Activated CD8-positive, alpha-beta T cell treated with anti-CD3 and anti-CD28 coated beads, Interleukin-2, amount 10 ng/mL, durations not matched to agents 7 days and 5 days (primary cell): ENCODE measurements at regions of chr7 and their contacts with region 1.

Region 1: GRCh38 chr7:142301923-142302550 is 44.2 kb upstream of the PRSS58 start:
- DNase-seq: no peak
- ATAC-seq: peak; percentile 47
- H3K4me3 Mint-ChIP-seq: no peak overlapping the region
- H3K27ac Mint-ChIP-seq: no peak overlapping the region
- H3K4me1 Mint-ChIP-seq: peaks cover 14% of the 10 kb centered on the region
- H3K27me3 Mint-ChIP-seq: peaks cover 19% of the 10 kb centered on the region

Region 2: DNA sequence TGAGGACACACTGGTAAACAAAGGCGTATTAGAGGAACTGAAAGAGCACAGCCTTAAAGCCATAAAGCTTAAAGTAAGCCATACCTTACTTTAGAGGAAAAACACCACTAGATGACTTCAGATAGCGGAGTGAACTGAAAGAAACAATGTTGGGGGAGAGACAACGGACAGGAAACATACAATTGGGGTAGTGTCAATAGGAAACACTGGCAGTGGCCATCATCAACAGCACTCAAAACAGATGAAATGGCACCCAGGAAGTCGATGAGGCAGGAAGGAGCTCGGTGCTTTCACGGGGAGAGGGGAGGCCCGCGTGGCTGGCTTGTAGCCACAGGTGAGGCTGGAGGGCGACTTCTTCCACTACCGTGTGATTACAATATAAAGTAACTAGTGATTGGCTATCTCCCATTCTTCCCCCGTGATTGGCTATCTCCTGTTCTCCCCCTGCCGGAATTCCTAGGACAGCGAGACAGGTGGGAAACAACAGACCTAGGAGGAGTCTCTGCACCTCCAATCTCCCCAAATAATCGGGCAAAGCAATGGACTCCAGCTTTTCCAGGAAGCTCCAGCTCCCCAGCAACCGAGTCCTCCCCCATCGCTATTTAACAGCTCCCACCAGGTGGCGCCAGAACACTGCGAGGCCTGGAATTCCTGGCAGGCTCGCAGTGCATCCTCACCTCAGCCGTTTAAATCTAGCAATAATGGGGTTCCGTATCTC is 326.1 kb before region 1 on chr7:
- CTCF ChIA-PET with region 1: interaction called, 88 read pairs
- POLR2A ChIA-PET with region 1: no interaction called
- DNase-seq: peak; percentile 77
- ATAC-seq: peak; percentile 91
- H3K4me3 Mint-ChIP-seq: peak overlapping the region; percentile 63
- H3K27ac Mint-ChIP-seq: peak overlapping the region; percentile 1
- H3K4me1 Mint-ChIP-seq: peaks cover 22% of the 10 kb centered on the region
- H3K27me3 Mint-ChIP-seq: no peaks in the 10 kb centered on the region

Region 3: DNA sequence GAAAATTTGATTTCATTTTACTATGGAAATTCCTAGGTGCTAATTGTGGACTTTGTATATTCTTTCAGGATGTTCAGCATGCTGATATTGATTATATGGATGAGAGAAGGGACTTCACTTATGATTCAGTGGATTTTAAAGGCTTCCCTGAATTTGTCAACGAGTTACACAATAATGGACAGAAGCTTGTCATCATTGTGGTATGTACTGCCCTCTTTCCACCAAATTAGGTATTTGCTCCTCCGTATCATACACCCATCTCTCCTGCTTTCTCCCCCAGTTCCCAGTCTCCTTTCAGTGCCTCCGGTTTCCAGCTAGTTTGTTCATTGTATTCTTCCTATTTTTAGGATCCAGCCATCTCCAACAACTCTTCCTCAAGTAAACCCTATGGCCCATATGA is 271.7 kb before region 1 on chr7:
- CTCF ChIA-PET with region 1: no interaction called
- POLR2A ChIA-PET with region 1: no interaction called
- DNase-seq: no peak
- ATAC-seq: no peak
- H3K4me3 Mint-ChIP-seq: no peak overlapping the region
- H3K27ac Mint-ChIP-seq: no peak overlapping the region
- H3K4me1 Mint-ChIP-seq: no peaks in the 10 kb centered on the region
- H3K27me3 Mint-ChIP-seq: peaks cover 7% of the 10 kb centered on the region

Region 4: DNA sequence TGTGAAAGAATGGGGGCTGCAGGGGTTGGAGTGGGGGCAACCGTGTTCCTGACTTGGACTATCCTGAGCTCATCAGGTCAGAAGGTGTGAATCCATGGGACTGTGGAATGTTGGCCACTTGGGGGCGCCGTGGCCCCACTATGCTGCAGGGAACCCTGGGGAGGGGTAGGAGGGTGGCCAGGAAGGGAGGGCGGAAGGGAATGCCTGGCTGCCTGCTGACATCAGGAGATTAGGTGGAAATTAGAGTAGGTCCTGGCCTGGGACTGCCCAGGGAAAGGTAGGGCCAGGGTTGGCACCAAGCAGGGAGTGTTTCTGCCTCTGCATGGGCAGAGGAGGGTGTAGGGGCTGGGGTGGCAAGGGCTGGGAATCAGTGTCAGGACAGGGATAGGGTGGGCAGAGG is 21.7 kb after region 1 on chr7:
- CTCF ChIA-PET with region 1: interaction called, 53 read pairs
- POLR2A ChIA-PET with region 1: interaction called, 4 read pairs
- DNase-seq: peak; percentile 53
- ATAC-seq: peak; percentile 72
- H3K4me3 Mint-ChIP-seq: no peak overlapping the region
- H3K27ac Mint-ChIP-seq: peak overlapping the region; percentile 31
- H3K4me1 Mint-ChIP-seq: peaks cover 20% of the 10 kb centered on the region
- H3K27me3 Mint-ChIP-seq: peaks cover 22% of the 10 kb centered on the region

Region 5: DNA sequence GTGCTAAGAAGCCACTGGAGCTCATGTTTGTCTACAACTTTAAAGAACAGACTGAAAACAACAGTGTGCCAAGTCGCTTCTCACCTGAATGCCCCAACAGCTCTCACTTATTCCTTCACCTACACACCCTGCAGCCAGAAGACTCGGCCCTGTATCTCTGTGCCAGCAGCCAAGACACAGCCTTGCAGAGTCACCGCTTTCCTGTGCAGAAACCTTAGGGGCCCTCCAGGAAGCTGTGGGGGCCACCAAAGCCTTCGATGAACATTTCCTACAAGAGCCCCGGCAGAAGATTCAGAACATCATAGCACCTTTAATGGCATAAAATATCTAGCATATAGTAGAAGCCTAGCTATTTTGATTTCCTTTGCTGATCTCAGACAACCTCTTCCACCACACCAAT is 43.8 kb after region 1 on chr7:
- CTCF ChIA-PET with region 1: interaction called, 15 read pairs
- POLR2A ChIA-PET with region 1: interaction called, 3 read pairs
- DNase-seq: peak; percentile 73
- ATAC-seq: peak; percentile 93
- H3K4me3 Mint-ChIP-seq: peak overlapping the region; percentile 47
- H3K27ac Mint-ChIP-seq: peak overlapping the region; percentile 79
- H3K4me1 Mint-ChIP-seq: peaks cover 27% of the 10 kb centered on the region
- H3K27me3 Mint-ChIP-seq: peaks cover 5% of the 10 kb centered on the region

Region 6: DNA sequence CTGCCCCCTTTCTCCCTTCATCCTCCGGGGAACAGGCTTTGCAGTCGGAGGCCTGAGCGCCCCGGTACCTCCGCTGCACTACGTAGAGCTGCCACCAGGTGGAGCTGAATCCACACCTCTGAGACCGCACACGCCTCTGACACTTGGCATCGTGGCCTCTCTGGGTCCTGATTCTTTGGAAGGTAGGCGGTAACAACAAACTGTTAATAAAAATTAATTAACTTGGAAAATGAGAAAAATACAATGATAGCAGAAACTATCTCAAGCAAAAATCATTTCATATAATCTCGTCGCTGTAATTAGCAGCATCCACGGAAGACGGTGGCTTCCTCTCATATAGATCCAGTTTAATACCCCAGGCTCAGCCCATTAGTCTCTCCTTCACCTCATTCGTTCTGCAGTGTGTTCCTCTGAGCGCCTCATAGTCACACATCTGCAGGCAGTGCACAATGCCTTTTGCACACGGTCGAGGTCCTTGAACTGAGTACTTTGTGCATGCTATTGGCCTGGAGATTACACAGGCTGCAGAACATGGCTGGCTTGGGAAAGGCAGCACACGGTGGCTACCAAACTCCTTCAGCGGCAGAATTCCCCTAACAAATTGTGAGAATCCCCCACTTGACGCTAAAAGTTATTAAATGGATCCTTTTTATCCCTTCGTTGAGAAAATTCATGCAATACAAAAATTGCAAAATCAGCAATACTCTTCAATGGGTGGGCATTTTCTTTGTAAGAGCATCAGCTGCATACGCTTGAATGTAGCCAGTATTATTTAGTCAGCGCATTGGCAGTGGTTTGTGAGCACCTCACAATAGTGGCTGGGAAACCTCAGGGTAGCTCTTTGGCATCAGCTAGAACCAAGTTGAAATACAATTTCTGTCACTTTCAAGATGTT is 706.2 kb after region 1 on chr7:
- CTCF ChIA-PET with region 1: interaction called, 22 read pairs
- POLR2A ChIA-PET with region 1: no interaction called
- DNase-seq: peak; percentile 86
- ATAC-seq: peak; percentile 93
- H3K4me3 Mint-ChIP-seq: no peak overlapping the region
- H3K27ac Mint-ChIP-seq: no peak overlapping the region
- H3K4me1 Mint-ChIP-seq: peaks cover 2% of the 10 kb centered on the region
- H3K27me3 Mint-ChIP-seq: peaks cover 22% of the 10 kb centered on the region